Dorsolateral prefrontal cortex (tissue), 120 donors: ENCODE measurements at regions of chr1 and their contacts with region 1.

Region 1: GRCh38 chr1:37859507-37860345 is at the start of gene MTF1:
- DNase-seq: peak; percentile 89 to 98 (median 97)
- H3K4me3 ChIP-seq: peak within 1 kb of the TSS; percentile 76 to 100 (median 93)
- H3K27ac ChIP-seq: peak within 1 kb of the TSS; percentile 60 to 95 (median 88)
- H3K27me3 ChIP-seq: no peaks in the 10 kb centered on the region
- CTCF ChIP-seq: peak; percentile 68 to 98 (median 89)
- total RNA-seq, gene MTF1: 12.4 to 40.5 (median 22.6) TPM

Region 2: GRCh38 chr1:37595440-37596319 is 264.0 kb before region 1 on chr1 and contains the start of gene GNL2:
- intact Hi-C with region 1: loop called (anchors 5 to 10 kb)
- DNase-seq: peak; percentile 93 to 98 (median 96)
- H3K4me3 ChIP-seq: peak within 1 kb of the TSS; percentile 63 to 99 (median 91)
- H3K27ac ChIP-seq: peak within 1 kb of the TSS in 51 of 59 donors; percentile 11 to 89 (median 57)
- H3K27me3 ChIP-seq: no peaks in the 10 kb centered on the region
- CTCF ChIP-seq: peak in 42 of 56 donors; percentile 9 to 61 (median 32)
- total RNA-seq, gene GNL2: 13.0 to 31.1 (median 20.2) TPM

Region 3: GRCh38 chr1:37931361-37932158 is 71.8 kb after region 1 on chr1:
- intact Hi-C with region 1: loop called in 1 of 2 experiments (anchors 5 kb)
- DNase-seq: peak; percentile 86 to 98 (median 94)
- H3K4me3 ChIP-seq: peak overlapping the region; percentile 53 to 92 (median 79)
- H3K27ac ChIP-seq: peak overlapping the region in 18 of 59 donors; percentile 15 to 76 (median 42)
- H3K27me3 ChIP-seq: no peaks in the 10 kb centered on the region
- CTCF ChIP-seq: peak in 54 of 56 donors; percentile 12 to 71 (median 44)